Esophagus muscularis mucosa (tissue), 4 donors: ENCODE measurements at regions of chr11 and their contacts with region 1.

Region 1: GRCh38 chr11:108664730-108665525 is at the start of gene DDX10:
- DNase-seq: peak; percentile 100
- H3K4me3 ChIP-seq: peak within 1 kb of the TSS; percentile 68 to 88 (median 80)
- H3K27ac ChIP-seq: peak within 1 kb of the TSS; percentile 50 to 81 (median 74)
- H3K4me1 ChIP-seq: peaks cover 19 to 46% (median 32%) of the 10 kb centered on the region in 4 donors
- H3K27me3 ChIP-seq: no peaks in the 10 kb centered on the region
- CTCF ChIP-seq: peak in 2 of 3 experiments; percentile 12 to 34
- EP300 ChIP-seq: no peak
- POLR2A ChIP-seq: no peak
- total RNA-seq, gene DDX10: 11.5 to 22.0 (median 14.3) TPM

Region 2: GRCh38 chr11:108121274-108122155 is 543.4 kb before region 1 on chr11 and contains the start of gene ACAT1:
- intact Hi-C with region 1: loop called (anchors 10 kb)
- DNase-seq: peak; percentile 99
- H3K4me3 ChIP-seq: peak within 1 kb of the TSS; percentile 68 to 90 (median 90)
- H3K27ac ChIP-seq: peak within 1 kb of the TSS; percentile 90 to 98 (median 98)
- H3K4me1 ChIP-seq: peaks cover 30 to 48% (median 45%) of the 10 kb centered on the region in 4 donors
- H3K27me3 ChIP-seq: no peaks in the 10 kb centered on the region
- CTCF ChIP-seq: peak; percentile 37 to 43 (median 41)
- EP300 ChIP-seq: no peak
- POLR2A ChIP-seq: peak; percentile 92
- total RNA-seq, gene ACAT1: 89.6 to 191 (median 139) TPM

Region 3: DNA sequence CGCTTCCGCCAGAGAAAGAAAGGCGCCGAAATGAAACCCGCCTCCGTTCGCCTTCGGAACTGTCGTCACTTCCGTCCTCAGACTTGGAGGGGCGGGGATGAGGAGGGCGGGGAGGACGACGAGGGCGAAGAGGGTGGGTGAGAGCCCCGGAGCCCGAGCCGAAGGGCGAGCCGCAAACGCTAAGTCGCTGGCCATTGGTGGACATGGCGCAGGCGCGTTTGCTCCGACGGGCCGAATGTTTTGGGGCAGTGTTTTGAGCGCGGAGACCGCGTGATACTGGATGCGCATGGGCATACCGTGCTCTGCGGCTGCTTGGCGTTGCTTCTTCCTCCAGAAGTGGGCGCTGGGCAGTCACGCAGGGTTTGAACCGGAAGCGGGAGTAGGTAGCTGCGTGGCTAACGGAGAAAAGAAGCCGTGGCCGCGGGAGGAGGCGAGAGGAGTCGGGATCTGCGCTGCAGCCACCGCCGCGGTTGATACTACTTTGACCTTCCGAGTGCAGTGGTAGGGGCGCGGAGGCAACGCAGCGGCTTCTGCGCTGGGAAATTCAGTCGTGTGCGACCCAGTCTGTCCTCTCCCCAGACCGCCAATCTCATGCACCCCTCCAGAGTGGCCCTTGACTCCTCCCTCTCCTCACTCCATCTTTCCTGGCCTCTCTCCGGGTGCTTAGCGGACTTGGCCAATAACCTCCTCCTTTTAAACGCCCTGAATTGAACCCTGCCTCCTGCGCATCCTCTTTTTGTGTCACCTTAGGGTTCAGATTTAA is 442.1 kb before region 1 on chr11 and contains the start of gene ATM:
- intact Hi-C with region 1: loop called (anchors 10 kb)
- DNase-seq: peak; percentile 100
- H3K4me3 ChIP-seq: peak within 1 kb of the TSS; percentile 68 to 82 (median 77)
- H3K27ac ChIP-seq: peak within 1 kb of the TSS; percentile 90 to 95 (median 94)
- H3K4me1 ChIP-seq: peaks cover 30 to 44% (median 42%) of the 10 kb centered on the region in 4 donors
- H3K27me3 ChIP-seq: no peaks in the 10 kb centered on the region
- CTCF ChIP-seq: peak; percentile 59 to 85 (median 59)
- EP300 ChIP-seq: no peak
- POLR2A ChIP-seq: peak; percentile 31
- total RNA-seq, gene ATM: 28.3 to 73.1 (median 34.1) TPM

Region 4: DNA sequence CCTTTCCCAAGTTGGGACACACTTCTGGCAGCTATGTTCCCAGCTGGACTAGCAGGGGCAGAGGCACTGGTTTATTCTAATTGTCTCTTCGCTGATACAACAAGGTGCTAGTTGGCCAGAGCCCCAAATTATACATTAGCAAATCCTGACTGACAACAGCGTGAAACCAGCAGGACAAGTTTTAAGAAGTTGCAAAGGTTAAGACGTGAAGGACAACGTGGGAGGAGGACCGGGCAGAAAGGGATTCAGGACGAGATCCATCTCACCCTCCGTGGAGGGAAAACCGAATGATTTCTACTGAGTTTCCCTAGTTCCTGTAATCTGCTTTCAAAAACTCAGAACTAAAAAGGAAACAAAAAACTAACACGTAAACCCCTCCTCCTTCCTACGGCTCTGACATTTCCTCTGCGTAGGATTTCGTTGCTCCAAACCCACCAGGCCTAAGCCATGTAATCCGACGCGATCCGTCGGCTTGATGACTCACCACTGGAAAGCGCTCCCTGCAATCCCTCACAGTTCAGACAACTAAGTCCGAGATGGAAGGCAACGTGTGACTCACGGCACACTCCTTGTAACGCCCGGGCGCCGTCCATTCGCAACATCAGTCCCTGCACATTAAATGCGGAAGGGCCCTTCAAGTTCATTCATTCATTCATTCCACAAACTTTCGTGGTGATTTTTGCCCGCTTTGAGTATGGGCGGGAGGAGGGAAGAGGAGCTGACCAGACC is 167.4 kb before region 1 on chr11:
- intact Hi-C with region 1: loop called (anchors 10 kb)
- DNase-seq: peak; percentile 95
- H3K4me3 ChIP-seq: peak overlapping the region; percentile 83 to 90 (median 86)
- H3K27ac ChIP-seq: peak overlapping the region; percentile 97 to 99 (median 98)
- H3K4me1 ChIP-seq: peaks cover 6 to 36% (median 23%) of the 10 kb centered on the region in 4 donors
- H3K27me3 ChIP-seq: no peaks in the 10 kb centered on the region
- CTCF ChIP-seq: no peak
- EP300 ChIP-seq: no peak
- POLR2A ChIP-seq: peak; percentile 24

Region 5: DNA sequence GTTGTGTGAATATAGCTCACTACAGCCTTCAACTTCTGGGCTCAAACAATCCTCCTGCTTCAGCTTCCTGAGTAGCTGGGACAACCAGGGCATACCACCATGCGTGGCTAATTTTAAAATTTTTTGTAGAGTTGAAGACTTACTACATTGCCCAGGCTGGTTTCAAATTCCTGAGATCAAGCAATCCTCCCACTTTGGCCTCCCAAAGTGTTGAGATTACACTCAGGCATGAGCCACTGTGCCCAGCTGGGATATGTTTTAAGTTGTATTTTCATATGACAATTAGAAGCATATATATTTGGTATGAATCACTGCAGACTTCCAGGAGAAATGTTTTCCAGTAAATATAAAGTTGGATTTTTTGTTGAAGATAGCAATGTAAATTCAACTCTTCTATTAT is 15.3 kb after region 1 on chr11:
- intact Hi-C with region 1: no loop called
- DNase-seq: no peak
- H3K4me3 ChIP-seq: no peak overlapping the region
- H3K27ac ChIP-seq: no peak overlapping the region
- H3K4me1 ChIP-seq: no peaks in the 10 kb centered on the region
- H3K27me3 ChIP-seq: no peaks in the 10 kb centered on the region
- CTCF ChIP-seq: no peak
- EP300 ChIP-seq: no peak
- POLR2A ChIP-seq: no peak